AG04449 (cell line): ENCODE measurements at regions of chr4 and their contacts with region 1.

Region 1: GRCh38 chr4:4995103-4995907 is 24.0 kb downstream of the CYTL1 start:
- DNase-seq: peak; percentile 10
- H3K4me3 ChIP-seq: no peak overlapping the region
- CTCF ChIP-seq: peak; percentile 91

Region 2: DNA sequence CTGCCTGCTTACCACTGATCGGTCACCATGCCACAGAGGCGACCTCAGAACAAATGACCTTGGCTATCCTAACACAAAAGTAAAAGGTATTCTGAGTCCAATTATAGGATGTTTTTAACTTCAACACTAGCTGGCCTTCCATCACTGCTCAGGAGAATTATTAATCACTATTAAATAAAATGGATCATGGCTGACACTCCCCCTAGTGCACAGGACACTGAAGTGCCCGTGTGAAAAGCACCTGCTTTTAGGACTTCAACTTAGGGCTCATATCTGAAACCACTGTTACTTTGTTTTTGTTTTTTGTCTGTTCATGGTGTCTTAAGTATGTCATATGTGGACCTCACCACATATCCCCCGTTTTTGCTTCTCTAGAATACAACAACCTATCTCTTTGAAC is 487.4 kb before region 1 on chr4:
- CTCF ChIA-PET with region 1: no interaction called
- POLR2A ChIA-PET with region 1: no interaction called
- DNase-seq: no peak
- H3K4me3 ChIP-seq: no peak overlapping the region
- CTCF ChIP-seq: no peak

Region 3: DNA sequence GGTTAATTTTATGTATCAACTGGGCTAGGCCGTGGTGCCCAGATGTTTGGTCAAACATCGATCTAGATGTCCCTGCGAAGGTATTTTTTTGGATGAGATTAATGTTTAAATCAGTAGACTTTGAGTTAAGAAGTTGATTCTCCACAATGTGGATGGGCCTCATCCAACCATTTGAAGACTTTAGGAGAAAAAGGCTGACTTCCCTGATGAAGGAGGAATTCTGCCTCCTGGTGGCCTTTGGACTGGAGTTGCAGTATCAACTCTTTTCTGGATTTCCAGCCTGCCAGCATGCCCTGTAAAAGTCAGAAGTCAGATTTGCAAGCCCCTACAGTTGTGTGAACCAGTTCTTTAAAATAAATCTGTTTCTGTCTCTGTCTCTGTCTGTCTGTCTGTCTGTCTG is 147.4 kb after region 1 on chr4:
- CTCF ChIA-PET with region 1: interaction called, 12 read pairs
- POLR2A ChIA-PET with region 1: no interaction called
- DNase-seq: no peak
- H3K4me3 ChIP-seq: no peak overlapping the region
- CTCF ChIP-seq: peak; percentile 54

Region 4: GRCh38 chr4:5220028-5220427 is 224.7 kb after region 1 on chr4:
- CTCF ChIA-PET with region 1: no interaction called
- POLR2A ChIA-PET with region 1: no interaction called
- DNase-seq: no peak
- H3K4me3 ChIP-seq: no peak overlapping the region
- CTCF ChIP-seq: no peak

Region 5: DNA sequence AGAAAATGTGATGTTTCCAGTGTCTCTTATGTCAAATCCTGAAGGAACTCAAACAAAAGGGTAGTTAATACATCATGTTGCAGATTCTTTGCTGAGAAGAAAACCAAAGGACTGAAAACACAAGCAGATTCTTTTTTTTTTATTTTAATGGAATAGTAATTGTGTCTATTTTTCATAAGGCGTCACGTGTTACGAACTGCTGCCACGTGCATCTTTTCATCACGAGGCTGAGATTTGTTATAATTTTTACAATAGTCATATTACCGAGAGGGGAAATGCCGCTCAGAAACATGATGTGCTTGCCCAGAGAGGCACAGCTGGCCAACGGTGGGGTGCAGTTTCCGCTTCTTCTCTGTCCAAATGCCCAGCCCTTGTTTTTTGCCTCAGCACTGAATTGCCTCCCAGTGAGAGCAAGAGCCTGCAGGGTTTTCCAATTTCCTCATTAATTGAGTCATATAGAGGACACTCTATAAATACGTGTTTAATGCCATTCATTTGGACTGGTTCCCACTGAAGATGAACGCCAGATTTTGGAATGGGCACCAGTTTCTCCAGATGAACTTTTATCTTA is 281.3 kb after region 1 on chr4:
- CTCF ChIA-PET with region 1: no interaction called
- POLR2A ChIA-PET with region 1: no interaction called
- DNase-seq: no peak
- H3K4me3 ChIP-seq: no peak overlapping the region
- CTCF ChIP-seq: no peak

Region 6: DNA sequence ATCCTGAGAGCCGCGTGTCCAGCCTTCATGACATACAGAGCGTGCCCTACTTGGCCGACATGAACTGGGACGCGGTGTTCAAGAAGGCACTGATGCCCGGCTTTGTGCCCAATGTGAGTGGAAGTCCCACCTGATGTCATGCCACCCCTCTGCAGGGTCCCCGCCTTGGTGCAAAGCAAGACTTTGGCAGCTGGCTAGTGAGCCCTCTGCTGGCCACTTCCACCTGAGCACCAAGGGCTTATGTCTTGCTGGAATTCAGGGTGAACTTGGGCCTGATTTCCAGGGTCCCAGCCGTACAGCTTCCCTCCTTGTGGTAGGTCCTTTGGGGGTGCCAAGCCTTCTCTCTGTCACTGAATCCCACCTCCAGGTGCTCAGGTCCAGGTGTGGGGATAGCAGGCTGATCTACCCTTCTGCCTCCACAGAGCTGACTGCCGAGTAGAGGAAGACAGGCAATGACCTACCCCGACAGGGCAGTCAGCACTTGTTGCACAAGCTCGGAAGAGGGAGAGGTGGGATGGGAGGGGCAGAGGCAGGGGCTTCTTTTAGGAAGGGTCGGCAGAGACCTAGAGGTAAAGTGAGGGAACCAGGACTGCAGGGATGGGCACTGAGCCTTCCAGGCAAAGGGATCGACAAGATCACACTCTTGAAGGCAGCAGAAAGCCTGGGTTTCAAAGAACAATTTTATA is 465.0 kb after region 1 on chr4:
- CTCF ChIA-PET with region 1: interaction called, 10 read pairs
- POLR2A ChIA-PET with region 1: no interaction called
- DNase-seq: no peak
- H3K4me3 ChIP-seq: no peak overlapping the region
- CTCF ChIP-seq: peak; percentile 80